ENCODE measurements at regions of chr6 and their contacts with region 1.

Region 1: GRCh38 chr6:148746363-148747144 is at the start of gene UST:
- DNase-seq: peak; percentile 95
- total RNA-seq, gene UST: 15.2 to 19.4 TPM

Region 2: GRCh38 chr6:148559848-148560433 is 186.6 kb before region 1 on chr6:
- intact Hi-C with region 1: loop called in 1 of 2 experiments (anchors 10 kb)
- DNase-seq: peak; percentile 94

Region 3: DNA sequence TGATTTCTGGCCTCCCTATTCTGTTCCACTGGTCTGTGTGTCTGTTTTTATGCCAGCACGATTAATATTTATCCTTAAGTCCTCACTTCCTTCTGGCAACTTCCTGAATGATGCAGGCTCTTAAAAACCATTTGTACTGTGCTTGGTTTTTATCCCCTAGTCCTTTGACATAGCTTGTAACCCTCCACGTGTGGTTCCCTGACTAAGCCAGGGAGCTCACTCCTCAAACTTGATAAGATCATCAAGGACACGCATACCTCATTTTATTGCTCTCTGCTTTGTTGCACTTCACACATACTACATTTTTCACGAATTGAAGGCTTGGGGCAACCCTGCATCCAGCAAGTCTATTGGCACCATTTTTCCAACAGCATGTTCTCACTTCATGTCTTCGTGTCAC is 166.1 kb before region 1 on chr6:
- intact Hi-C with region 1: no loop called
- DNase-seq: no peak

Region 4: DNA sequence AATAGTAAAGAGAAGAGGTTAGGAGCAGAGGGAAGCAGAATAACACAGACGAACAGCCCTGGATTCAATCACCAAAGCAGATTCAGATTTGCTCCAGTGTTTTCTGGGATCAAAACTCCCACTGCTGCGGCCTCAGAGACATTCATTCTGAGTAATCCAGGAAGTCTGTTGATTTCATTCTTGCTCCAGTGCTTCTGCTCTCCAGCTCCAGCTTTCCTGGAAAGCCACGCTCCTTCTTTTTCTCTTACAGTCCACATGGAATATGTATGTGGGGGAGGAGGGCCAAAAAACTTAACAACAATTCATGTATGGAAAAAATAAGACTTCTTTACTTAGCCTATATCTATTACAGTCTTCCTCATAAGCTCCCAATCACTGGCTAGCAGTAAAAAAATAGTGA is 26.1 kb before region 1 on chr6:
- intact Hi-C with region 1: no loop called
- DNase-seq: no peak

Region 5: GRCh38 chr6:148874698-148875293 is 128.2 kb after region 1 on chr6:
- intact Hi-C with region 1: loop called in 1 of 2 experiments (anchors 10 kb)
- DNase-seq: no peak

Region 6: GRCh38 chr6:148947621-148948444 is 201.3 kb after region 1 on chr6:
- intact Hi-C with region 1: loop called in 1 of 2 experiments (anchors 5 kb)
- DNase-seq: peak; percentile 93

Region 7: DNA sequence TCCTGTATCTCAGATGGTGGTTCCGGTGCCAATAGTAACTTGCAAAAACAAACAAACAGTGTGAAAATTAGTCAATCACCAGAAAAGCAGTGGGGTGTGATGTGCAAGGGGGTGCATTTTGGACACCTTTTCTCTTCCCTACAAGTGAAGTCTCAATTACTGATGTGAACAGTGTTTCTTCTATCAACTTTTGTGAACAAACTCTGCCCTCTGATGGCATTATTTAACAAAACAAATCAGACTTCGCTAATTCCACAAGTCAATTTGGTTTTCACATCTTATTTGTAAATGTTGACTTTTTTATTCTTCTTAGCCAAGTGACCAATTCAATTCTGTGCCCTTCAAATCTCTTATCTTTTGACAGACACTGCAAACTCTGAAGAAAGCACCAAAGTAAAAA is 212.4 kb after region 1 on chr6:
- intact Hi-C with region 1: loop called in 1 of 2 experiments (anchors 5 kb)
- DNase-seq: no peak